CD8-positive, alpha-beta memory T cell (primary cell): ENCODE measurements at regions of chr19 and their contacts with region 1.

Region 1: DNA sequence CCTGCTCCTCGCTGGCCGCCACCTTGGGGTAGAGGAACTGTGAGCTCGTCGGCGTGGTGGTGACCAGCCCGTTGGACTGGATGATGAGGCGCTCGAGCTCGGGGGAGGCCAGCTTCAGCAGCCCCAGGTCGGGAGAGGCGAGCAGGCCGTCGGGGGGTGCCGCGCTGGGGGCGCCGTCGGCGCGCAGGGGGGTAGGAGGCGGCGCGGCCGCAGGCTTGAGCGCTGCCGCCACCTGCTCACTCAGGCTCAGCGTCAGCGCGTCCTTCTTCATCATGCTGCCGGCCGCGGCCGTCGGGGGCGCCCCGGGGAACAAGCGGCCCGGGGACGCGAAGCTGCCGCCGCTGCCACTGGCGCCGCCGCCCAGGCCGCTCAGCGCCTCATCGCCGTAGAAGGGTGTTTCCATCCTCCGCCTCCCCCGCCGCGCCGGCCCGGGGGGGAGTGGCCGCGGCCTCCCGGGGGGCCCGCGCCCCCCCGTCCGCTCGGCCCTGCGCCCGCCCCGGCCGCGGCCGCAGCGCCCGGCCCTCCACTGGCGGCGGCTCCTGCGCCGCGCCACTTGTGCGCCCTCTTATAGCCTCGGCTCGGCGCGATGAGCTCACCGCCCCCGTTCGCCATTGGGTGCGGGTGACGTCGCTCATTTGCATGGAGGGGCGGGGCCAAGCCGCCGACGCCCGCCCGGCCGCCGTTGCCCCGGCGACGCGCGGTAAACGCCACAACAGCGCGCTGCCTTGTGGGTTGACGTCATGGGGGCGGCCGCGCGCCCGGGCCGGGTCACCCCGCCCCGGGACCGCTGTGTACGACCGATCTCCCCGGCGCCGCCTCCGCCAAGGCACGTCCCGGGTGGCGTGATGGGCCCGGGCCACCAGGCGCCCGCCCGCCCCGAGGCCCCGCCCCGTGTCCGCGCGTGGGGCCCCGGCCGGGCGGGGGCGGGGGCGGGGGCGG is at the start of gene JUND:
- DNase-seq: peak; percentile 97 to 99 (median 99)
- H3K4me3 ChIP-seq: peak within 1 kb of the TSS; percentile 98
- H3K4me3 Mint-ChIP-seq: peak within 1 kb of the TSS; percentile 89 to 98 (median 98)
- H3K27ac ChIP-seq: peak within 1 kb of the TSS; percentile 100
- H3K27ac Mint-ChIP-seq: peak within 1 kb of the TSS; percentile 95 to 99 (median 98)
- H3K4me1 ChIP-seq: peaks cover 41% of the 10 kb centered on the region
- H3K4me1 Mint-ChIP-seq: peaks cover 38 to 56% (median 49%) of the 10 kb centered on the region in 3 donors
- H3K27me3 ChIP-seq: no peaks in the 10 kb centered on the region
- H3K27me3 Mint-ChIP-seq: peaks cover 0 to 42% of the 10 kb centered on the region in 2 donors
- total RNA-seq, gene JUND: 300 to 327 TPM

Region 2: GRCh38 chr19:18117692-18118378 is 163.5 kb before region 1 on chr19:
- CTCF ChIA-PET with region 1: interaction called, 4 read pairs
- POLR2A ChIA-PET with region 1: interaction called, 11 read pairs
- DNase-seq: peak; percentile 95 to 97 (median 96)
- H3K4me3 ChIP-seq: peak overlapping the region; percentile 91
- H3K4me3 Mint-ChIP-seq: peak overlapping the region; percentile 86 to 97 (median 92)
- H3K27ac ChIP-seq: peak overlapping the region; percentile 72
- H3K27ac Mint-ChIP-seq: peak overlapping the region in 7 of 8 donors; percentile 86 to 100 (median 98)
- H3K4me1 ChIP-seq: peaks cover 32% of the 10 kb centered on the region
- H3K4me1 Mint-ChIP-seq: peaks cover 30 to 42% (median 31%) of the 10 kb centered on the region in 3 donors
- H3K27me3 ChIP-seq: no peaks in the 10 kb centered on the region
- H3K27me3 Mint-ChIP-seq: peaks cover 0 to 2% of the 10 kb centered on the region in 2 donors

Region 3: GRCh38 chr19:18203863-18204393 is 77.4 kb before region 1 on chr19 and contains the start of gene RAB3A:
- CTCF ChIA-PET with region 1: interaction called, 12 read pairs
- POLR2A ChIA-PET with region 1: interaction called, 41 read pairs
- DNase-seq: peak; percentile 99 to 100 (median 99)
- H3K4me3 ChIP-seq: peak within 1 kb of the TSS; percentile 94
- H3K4me3 Mint-ChIP-seq: peak within 1 kb of the TSS; percentile 93 to 98 (median 96)
- H3K27ac ChIP-seq: peak within 1 kb of the TSS; percentile 78
- H3K27ac Mint-ChIP-seq: peak within 1 kb of the TSS; percentile 81 to 99 (median 97)
- H3K4me1 ChIP-seq: peaks cover 17% of the 10 kb centered on the region
- H3K4me1 Mint-ChIP-seq: peaks cover 16 to 36% (median 22%) of the 10 kb centered on the region in 3 donors
- H3K27me3 ChIP-seq: peaks cover 5% of the 10 kb centered on the region
- H3K27me3 Mint-ChIP-seq: peaks cover 3 to 6% of the 10 kb centered on the region in 2 donors
- total RNA-seq, gene RAB3A: 2.9 to 3.8 TPM

Region 4: GRCh38 chr19:18298601-18299000 is 17.2 kb after region 1 on chr19:
- CTCF ChIA-PET with region 1: interaction called, 96 read pairs
- POLR2A ChIA-PET with region 1: interaction called, 283 read pairs
- DNase-seq: no peak
- H3K4me3 ChIP-seq: no peak overlapping the region
- H3K4me3 Mint-ChIP-seq: peak overlapping the region in 1 of 7 donors; percentile 30
- H3K27ac ChIP-seq: no peak overlapping the region
- H3K27ac Mint-ChIP-seq: peak overlapping the region in 3 of 8 donors; percentile 46 to 71 (median 65)
- H3K4me1 ChIP-seq: peaks cover 38% of the 10 kb centered on the region
- H3K4me1 Mint-ChIP-seq: peaks cover 19 to 29% (median 28%) of the 10 kb centered on the region in 3 donors
- H3K27me3 ChIP-seq: no peaks in the 10 kb centered on the region
- H3K27me3 Mint-ChIP-seq: peaks cover 0 to 3% of the 10 kb centered on the region in 2 donors

Region 5: GRCh38 chr19:18322759-18323460 is 41.6 kb after region 1 on chr19 and contains the start of gene LSM4:
- CTCF ChIA-PET with region 1: interaction called, 436 read pairs
- POLR2A ChIA-PET with region 1: interaction called, 240 read pairs
- DNase-seq: peak; percentile 99 to 100 (median 99)
- H3K4me3 ChIP-seq: peak within 1 kb of the TSS; percentile 88
- H3K4me3 Mint-ChIP-seq: peak within 1 kb of the TSS; percentile 78 to 91 (median 83)
- H3K27ac ChIP-seq: peak within 1 kb of the TSS; percentile 91
- H3K27ac Mint-ChIP-seq: peak within 1 kb of the TSS; percentile 89 to 98 (median 98)
- H3K4me1 ChIP-seq: peaks cover 57% of the 10 kb centered on the region
- H3K4me1 Mint-ChIP-seq: peaks cover 45 to 58% (median 53%) of the 10 kb centered on the region in 3 donors
- H3K27me3 ChIP-seq: no peaks in the 10 kb centered on the region
- H3K27me3 Mint-ChIP-seq: no peaks in the 10 kb centered on the region
- total RNA-seq, gene LSM4: 351 to 373 TPM

Region 6: DNA sequence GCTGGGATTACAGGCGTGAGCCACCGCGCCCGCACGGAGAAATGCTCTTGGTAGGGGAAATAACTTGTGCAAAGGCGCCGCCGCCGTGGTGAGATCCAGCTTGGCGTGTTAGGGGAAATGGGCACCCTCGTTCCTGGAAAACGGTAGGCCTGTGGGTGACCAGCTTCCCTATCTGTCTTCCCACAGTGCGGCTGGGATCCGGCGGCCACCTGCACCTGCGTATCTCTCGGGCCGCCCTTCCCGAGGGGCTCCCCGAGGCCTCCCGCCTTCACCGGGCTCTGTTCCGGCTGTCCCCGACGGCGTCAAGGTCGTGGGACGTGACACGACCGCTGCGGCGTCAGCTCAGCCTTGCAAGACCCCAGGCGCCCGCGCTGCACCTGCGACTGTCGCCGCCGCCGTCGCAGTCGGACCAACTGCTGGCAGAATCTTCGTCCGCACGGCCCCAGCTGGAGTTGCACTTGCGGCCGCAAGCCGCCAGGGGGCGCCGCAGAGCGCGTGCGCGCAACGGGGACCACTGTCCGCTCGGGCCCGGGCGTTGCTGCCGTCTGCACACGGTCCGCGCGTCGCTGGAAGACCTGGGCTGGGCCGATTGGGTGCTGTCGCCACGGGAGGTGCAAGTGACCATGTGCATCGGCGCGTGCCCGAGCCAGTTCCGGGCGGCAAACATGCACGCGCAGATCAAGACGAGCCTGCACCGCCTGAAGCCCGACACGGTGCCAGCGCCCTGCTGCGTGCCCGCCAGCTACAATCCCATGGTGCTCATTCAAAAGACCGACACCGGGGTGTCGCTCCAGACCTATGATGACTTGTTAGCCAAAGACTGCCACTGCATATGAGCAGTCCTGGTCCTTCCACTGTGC is 107.0 kb after region 1 on chr19:
- CTCF ChIA-PET with region 1: interaction called, 34 read pairs
- POLR2A ChIA-PET with region 1: interaction called, 4 read pairs
- DNase-seq: peak; percentile 62 to 83 (median 70)
- H3K4me3 ChIP-seq: peak overlapping the region; percentile 45
- H3K4me3 Mint-ChIP-seq: peak overlapping the region in 6 of 7 donors; percentile 71 to 83 (median 78)
- H3K27ac ChIP-seq: peak overlapping the region; percentile 61
- H3K27ac Mint-ChIP-seq: peak overlapping the region in 1 of 8 donors; percentile 9
- H3K4me1 ChIP-seq: no peaks in the 10 kb centered on the region
- H3K4me1 Mint-ChIP-seq: peaks cover 5 to 13% (median 11%) of the 10 kb centered on the region in 3 donors
- H3K27me3 ChIP-seq: peaks cover 22% of the 10 kb centered on the region
- H3K27me3 Mint-ChIP-seq: peaks cover 16 to 34% of the 10 kb centered on the region in 2 donors

Region 7: DNA sequence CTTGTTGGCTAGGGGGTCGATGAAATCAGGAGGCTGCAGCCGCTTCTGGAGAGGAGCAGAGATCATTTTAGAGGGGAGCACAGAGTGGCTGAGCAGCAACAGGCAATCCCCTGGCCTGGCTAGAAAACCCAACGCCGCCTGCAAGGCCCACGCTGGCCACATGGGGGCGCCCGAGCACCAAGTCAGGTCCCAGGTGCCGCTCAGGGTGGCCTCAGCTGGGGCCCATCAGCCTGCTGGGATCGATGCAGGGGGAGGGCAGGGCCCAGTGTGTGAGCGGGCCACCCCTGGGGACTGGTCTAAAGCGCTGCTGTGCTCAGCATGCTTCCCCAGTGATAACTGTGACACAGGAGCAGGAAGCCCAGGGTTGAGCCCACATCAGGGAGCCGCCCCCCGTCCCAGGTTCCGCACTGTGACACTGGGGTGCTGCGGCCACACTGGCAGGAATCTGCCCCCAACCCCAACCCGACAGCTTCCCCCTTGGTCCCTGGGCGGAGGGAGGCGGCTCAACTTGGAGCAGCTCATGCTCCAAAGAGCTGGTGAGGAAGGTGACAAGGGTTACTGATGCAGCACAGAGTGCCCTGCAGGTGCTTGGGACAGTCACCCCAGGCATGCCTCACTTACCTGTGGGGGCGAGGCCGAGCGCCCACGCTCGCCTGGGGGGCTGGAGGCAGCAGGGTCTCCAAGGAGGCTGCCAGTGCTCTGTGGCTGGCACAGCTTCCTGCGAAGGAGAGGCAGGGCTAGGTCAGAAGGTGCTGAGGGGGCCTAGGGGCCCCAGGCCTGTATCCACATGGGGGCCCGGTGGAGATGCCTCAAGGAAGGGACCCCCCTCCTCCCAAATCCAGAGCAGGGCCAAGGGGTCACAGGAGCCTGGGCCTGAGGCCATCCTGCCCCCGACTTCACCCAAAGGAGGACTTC is 169.8 kb after region 1 on chr19:
- CTCF ChIA-PET with region 1: no interaction called
- POLR2A ChIA-PET with region 1: no interaction called
- DNase-seq: peak; percentile 78 to 89 (median 83)
- H3K4me3 ChIP-seq: no peak overlapping the region
- H3K4me3 Mint-ChIP-seq: peak overlapping the region in 1 of 7 donors; percentile 84
- H3K27ac ChIP-seq: no peak overlapping the region
- H3K27ac Mint-ChIP-seq: peak overlapping the region in 5 of 8 donors; percentile 14 to 94 (median 80)
- H3K4me1 ChIP-seq: no peaks in the 10 kb centered on the region
- H3K4me1 Mint-ChIP-seq: peaks cover 4 to 8% (median 5%) of the 10 kb centered on the region in 3 donors
- H3K27me3 ChIP-seq: no peaks in the 10 kb centered on the region
- H3K27me3 Mint-ChIP-seq: no peaks in the 10 kb centered on the region